ENCODE measurements at regions of chr16 and their contacts with region 1.

Region 1: GRCh38 chr16:3003582-3004302 is 9.0 kb upstream of the CLDN9 start:
- DNase-seq: peak; percentile 96 to 100 (median 98)

Region 2: GRCh38 chr16:3021449-3022207 is 17.9 kb after region 1 on chr16:
- intact Hi-C with region 1: loop called (anchors 2 kb)
- DNase-seq: peak in 4 of 10 donors; percentile 6 to 90 (median 29)

Region 3: DNA sequence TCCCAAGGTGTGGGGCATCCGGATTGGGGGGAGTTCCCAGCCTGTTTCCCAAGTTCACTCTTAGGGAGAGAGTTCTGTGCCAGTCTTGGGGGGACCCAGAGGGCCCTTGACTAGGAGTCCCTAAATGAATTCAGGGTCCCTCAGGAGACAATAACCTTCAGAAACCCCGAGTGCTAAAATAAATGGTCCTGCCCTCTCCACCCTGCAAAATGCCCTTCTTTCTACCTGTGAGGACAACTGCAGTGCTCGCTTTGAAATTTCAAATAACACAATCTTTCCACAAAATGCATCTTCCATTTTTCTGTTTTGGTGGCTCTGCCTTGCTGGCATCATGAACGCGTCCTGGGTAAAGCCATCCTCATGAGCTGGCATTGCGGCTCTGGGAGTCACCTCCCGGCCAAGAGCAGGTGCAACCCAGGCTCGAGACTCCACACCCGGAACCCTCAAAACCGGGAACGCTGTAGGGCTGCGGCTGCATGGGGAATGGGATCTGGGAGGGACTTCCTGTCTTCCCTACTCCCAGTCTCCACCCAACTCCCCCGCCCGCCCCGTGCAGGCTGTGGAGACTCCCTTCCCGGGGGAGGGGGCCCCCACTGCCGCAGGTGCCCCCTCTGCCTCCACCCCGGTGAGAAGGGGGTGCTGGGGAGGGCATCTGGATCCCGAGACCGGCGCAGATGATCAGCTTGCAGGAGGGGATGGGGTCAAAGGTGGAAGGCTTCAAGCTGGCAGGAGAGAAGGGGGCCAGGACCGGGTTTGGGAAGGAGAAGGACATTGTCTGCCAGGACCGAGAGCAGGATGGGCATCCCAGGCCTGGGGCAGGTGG is 108.5 kb after region 1 on chr16 and contains the start of gene ZNF205:
- intact Hi-C with region 1: no loop called
- DNase-seq: peak; percentile 72 to 97 (median 82)